ENCODE measurements at regions of chr19 and their contacts with region 1.

Region 1: DNA sequence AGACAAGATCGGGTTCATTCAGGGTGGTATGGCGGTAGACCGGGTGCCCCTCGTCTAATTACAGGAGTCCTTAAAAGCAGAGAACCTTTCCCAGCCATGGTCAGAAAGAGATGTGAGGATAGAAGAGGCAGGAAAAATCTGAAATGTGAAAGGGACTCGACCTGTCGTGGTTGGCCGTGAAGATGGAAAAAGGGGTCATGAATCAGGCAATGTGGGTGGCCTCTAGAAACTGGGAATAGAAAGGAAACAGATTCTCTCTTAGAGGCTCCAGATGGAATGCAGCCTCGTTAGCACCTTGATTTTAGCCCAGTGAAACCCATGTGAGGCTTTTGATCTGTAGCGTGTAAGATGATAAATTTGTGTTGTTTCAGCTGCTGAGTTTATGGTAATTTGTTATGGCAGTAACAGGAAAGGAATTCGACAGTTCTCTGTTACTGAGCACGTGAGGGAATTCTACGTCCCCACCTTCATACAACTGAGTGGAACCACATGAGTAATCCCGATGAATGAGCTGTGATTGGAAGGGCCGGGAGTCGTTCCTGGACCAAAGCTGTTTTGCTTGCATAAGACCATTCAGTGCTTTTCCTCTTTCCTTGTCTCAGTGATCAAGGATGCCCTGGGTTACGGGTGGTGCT is 11.0 kb upstream of the CA11 start:
- DNase-seq: no peak
- H3K4me3 ChIP-seq: no peak overlapping the region
- H3K27ac ChIP-seq: no peak overlapping the region
- H3K4me1 ChIP-seq: peaks cover 0 to 14% (median 11%) of the 10 kb centered on the region in 3 donors
- H3K27me3 ChIP-seq: no peaks in the 10 kb centered on the region
- CTCF ChIP-seq: no peak
- POLR2A ChIP-seq: no peak

Region 2: GRCh38 chr19:48501496-48502350 is 155.2 kb before region 1 on chr19:
- intact Hi-C with region 1: no loop called
- DNase-seq: peak; percentile 61
- H3K4me3 ChIP-seq: peak overlapping the region; percentile 30 to 59 (median 49)
- H3K27ac ChIP-seq: peak overlapping the region; percentile 57 to 85 (median 78)
- H3K4me1 ChIP-seq: peaks cover 0 to 62% (median 17%) of the 10 kb centered on the region in 3 donors
- H3K27me3 ChIP-seq: peaks cover 0 to 52% (median 0%) of the 10 kb centered on the region in 4 donors
- CTCF ChIP-seq: no peak
- POLR2A ChIP-seq: peak in 1 of 4 donors; percentile 4

Region 3: GRCh38 chr19:48770260-48770659 is 113.3 kb after region 1 on chr19:
- intact Hi-C with region 1: loop called (anchors 10 kb)
- DNase-seq: no peak
- H3K4me3 ChIP-seq: no peak overlapping the region
- H3K27ac ChIP-seq: peak overlapping the region; percentile 63 to 92 (median 87)
- H3K4me1 ChIP-seq: peaks cover 3 to 31% (median 3%) of the 10 kb centered on the region in 3 donors
- H3K27me3 ChIP-seq: no peaks in the 10 kb centered on the region
- CTCF ChIP-seq: no peak
- POLR2A ChIP-seq: no peak